Activated CD4-positive, alpha-beta memory T cell treated with anti-CD3 and anti-CD28 coated beads, Interleukin-2, amount 10 ng/mL, durations not matched to agents 7 days and 5 days (primary cell): ENCODE measurements at regions of chr2 and their contacts with region 1.

Region 1: DNA sequence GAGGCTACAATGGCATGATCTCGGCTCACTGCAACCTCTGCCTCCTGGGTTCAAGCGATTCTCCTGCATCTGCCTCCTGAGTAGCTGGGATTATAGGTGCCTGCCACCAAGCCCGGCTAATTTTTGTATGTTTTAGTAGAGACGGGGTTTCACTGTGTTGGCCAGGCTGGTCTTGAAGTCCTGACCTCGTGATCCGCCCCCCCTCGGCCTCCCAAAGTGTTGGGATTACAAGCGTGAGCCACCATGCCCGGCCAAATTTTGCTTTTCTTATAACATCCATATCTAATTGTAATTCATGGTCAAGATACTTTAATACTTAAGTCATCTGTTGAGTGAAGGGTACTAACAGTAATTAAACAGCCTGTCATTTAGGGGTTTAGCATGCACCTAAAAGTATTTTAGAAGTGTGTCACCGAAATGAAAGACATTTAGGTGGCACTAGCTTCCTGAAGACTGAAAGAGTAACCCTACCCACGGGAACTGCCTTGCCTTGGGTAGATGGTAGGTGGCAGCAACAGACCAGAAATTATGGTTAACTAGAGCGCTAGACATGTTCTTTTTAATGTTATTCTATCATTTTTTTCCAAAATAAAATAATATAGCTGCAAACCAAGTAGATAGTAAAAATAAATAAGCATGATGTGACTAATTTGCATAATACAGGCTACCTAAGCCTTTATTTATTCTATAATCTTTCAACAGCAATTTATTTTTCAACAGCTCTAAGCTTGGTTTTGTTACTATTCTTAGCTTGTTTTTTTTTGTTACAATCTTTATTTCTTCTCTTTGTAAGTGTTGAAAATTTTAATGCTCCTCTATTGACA is 8.6 kb upstream of the ACYP2 start:
- DNase-seq: peak; percentile 57
- H3K4me3 Mint-ChIP-seq: no peak overlapping the region
- H3K27ac Mint-ChIP-seq: no peak overlapping the region
- H3K4me1 Mint-ChIP-seq: peaks cover 14% of the 10 kb centered on the region
- H3K27me3 Mint-ChIP-seq: no peaks in the 10 kb centered on the region

Region 2: GRCh38 chr2:54052825-54053718 is 53.8 kb before region 1 on chr2:
- CTCF ChIA-PET with region 1: interaction called, 15 read pairs
- POLR2A ChIA-PET with region 1: no interaction called
- DNase-seq: no peak
- H3K4me3 Mint-ChIP-seq: no peak overlapping the region
- H3K27ac Mint-ChIP-seq: peak overlapping the region; percentile 77
- H3K4me1 Mint-ChIP-seq: peaks cover 37% of the 10 kb centered on the region
- H3K27me3 Mint-ChIP-seq: no peaks in the 10 kb centered on the region

Region 3: GRCh38 chr2:54092940-54093339 is 13.9 kb before region 1 on chr2:
- CTCF ChIA-PET with region 1: interaction called, 10 read pairs
- POLR2A ChIA-PET with region 1: interaction called, 3 read pairs
- DNase-seq: peak; percentile 22
- H3K4me3 Mint-ChIP-seq: no peak overlapping the region
- H3K27ac Mint-ChIP-seq: peak overlapping the region; percentile 69
- H3K4me1 Mint-ChIP-seq: peaks cover 23% of the 10 kb centered on the region
- H3K27me3 Mint-ChIP-seq: peaks cover 3% of the 10 kb centered on the region

Region 4: GRCh38 chr2:54149638-54150441 is 43.0 kb after region 1 on chr2:
- CTCF ChIA-PET with region 1: no interaction called
- POLR2A ChIA-PET with region 1: no interaction called
- DNase-seq: no peak
- H3K4me3 Mint-ChIP-seq: no peak overlapping the region
- H3K27ac Mint-ChIP-seq: no peak overlapping the region
- H3K4me1 Mint-ChIP-seq: no peaks in the 10 kb centered on the region
- H3K27me3 Mint-ChIP-seq: no peaks in the 10 kb centered on the region

Region 5: GRCh38 chr2:54503192-54503591 is 396.3 kb after region 1 on chr2:
- CTCF ChIA-PET with region 1: interaction called, 21 read pairs
- POLR2A ChIA-PET with region 1: no interaction called
- DNase-seq: peak; percentile 24
- H3K4me3 Mint-ChIP-seq: no peak overlapping the region
- H3K27ac Mint-ChIP-seq: no peak overlapping the region
- H3K4me1 Mint-ChIP-seq: no peaks in the 10 kb centered on the region
- H3K27me3 Mint-ChIP-seq: peaks cover 4% of the 10 kb centered on the region